ENCODE measurements at regions of chr1 and their contacts with region 1.

Region 1: DNA sequence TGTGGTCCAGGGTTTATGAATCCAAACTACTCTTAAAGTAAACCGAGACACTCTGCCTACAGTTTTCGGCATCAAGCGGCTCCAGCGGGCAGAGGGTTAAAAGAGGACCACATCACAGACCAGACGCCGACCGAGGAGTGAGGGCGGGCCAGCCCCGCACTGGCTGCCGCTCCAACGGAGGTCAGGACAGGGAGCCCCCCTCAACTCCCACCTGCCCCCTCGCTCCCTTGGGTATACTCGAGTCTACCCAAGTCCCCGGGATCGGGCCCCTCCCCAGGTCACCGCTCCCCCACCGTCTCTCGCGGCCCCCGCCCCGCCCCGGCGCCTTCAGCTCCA is 312 bp downstream of the ARNT start:
- DNase-seq: no peak
- ATAC-seq: peak in 1 of 3 donors; percentile 36
- H3K4me3 ChIP-seq: peak overlapping the region; percentile 63
- H3K4me3 Mint-ChIP-seq: peak overlapping the region; percentile 91
- H3K27ac ChIP-seq: peak overlapping the region; percentile 61
- H3K27ac Mint-ChIP-seq: peak overlapping the region; percentile 90 to 95
- H3K4me1 ChIP-seq: peaks cover 12% of the 10 kb centered on the region
- H3K4me1 Mint-ChIP-seq: peaks cover 18 to 23% of the 10 kb centered on the region in 2 donors
- H3K27me3 ChIP-seq: no peaks in the 10 kb centered on the region
- H3K27me3 Mint-ChIP-seq: no peaks in the 10 kb centered on the region
- CTCF ChIP-seq: no peak

Region 2: DNA sequence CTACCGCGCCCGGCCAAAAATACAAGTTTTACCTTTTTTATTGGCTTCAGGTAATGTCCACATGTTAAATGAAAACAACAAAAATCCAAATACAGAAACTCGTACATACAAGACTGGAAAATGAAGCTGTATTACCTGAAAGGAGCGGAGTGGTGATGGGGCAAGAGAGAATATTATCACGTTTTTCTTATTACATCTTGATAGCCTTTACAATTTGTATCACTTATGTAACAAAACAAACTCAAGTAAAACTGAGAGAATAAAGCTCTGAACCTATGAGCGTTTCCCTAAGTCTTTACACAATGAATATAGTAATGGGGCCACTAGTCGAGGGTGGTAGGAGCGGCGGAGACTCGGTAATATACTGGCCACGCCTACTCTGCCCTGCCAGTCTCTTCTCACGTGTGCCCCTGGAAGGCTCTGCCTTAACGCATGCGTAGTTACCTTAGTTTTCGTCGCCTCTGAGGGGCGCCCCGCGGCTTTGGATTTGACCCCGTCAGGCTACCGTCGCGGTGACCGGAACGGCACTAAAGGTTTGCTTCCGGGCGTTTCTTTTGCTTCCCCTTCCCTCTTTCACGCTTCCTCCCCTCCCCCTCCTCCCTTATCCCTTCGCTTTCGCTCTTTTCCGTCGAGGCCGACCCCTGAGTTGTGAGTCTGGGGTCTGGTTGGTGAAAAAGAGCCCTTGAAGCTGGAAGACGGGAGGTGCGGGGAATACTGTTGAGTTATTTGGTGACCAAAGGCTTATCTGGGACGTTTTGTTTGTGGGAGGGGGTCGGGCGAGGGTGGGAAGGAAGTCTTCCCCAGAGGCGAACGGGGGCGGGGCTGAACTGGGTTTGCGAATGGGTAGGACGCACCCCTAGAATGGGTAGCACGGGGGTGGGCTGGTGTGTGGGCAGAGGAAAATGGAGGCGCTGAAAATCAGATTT is 50.0 kb after region 1 on chr1 and contains the start of gene SETDB1:
- intact Hi-C with region 1: loop called (anchors 1 kb)
- DNase-seq: peak; percentile 88 to 96
- ATAC-seq: peak; percentile 93 to 99 (median 96)
- H3K4me3 ChIP-seq: peak within 1 kb of the TSS; percentile 85
- H3K4me3 Mint-ChIP-seq: peak within 1 kb of the TSS; percentile 95
- H3K27ac ChIP-seq: peak within 1 kb of the TSS; percentile 76
- H3K27ac Mint-ChIP-seq: peak within 1 kb of the TSS; percentile 95
- H3K4me1 ChIP-seq: peaks cover 16% of the 10 kb centered on the region
- H3K4me1 Mint-ChIP-seq: peaks cover 22 to 27% of the 10 kb centered on the region in 2 donors
- H3K27me3 ChIP-seq: no peaks in the 10 kb centered on the region
- H3K27me3 Mint-ChIP-seq: no peaks in the 10 kb centered on the region
- CTCF ChIP-seq: no peak
- total RNA-seq, gene SETDB1: 64.6 to 74.3 (median 70.5) TPM

Measured in natural killer cell (primary cell).